Heart right ventricle (tissue), 16 donors: ENCODE measurements at regions of chr10 and their contacts with region 1.

Region 1: GRCh38 chr10:113126229-113127201 is 176.5 kb downstream of the TCF7L2 start:
- DNase-seq: peak; percentile 55 to 75
- ATAC-seq: peak; percentile 87 to 99 (median 94)
- H3K4me3 ChIP-seq: peak overlapping the region in 8 of 10 donors; percentile 19 to 47 (median 39)
- H3K27ac ChIP-seq: peak overlapping the region in 7 of 10 donors; percentile 5 to 69 (median 28)
- H3K4me1 ChIP-seq: peaks cover 0 to 27% (median 4%) of the 10 kb centered on the region in 9 donors
- H3K27me3 ChIP-seq: peaks cover 0 to 18% (median 0%) of the 10 kb centered on the region in 7 donors
- CTCF ChIP-seq: peak; percentile 54 to 87 (median 75)

Region 2: DNA sequence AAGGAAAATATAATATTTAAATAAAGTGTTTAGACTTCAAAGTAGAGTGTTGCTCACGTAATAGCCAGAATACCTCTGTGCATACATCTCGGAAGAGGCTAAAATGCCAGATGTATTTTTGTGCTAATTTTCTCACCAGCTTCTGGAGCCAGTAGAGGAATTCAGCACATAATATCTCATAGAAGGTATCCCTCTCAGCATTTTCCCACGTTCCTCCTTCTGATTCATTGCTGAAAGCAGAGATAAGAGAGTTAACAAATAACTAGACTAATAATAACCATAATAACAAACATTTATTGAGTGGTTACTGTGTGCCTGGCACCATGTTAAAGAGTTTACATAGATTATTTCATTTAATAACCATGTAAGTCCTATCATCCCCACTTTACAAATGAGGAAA is 555.9 kb before region 1 on chr10:
- intact Hi-C with region 1: loop called in 6 of 10 experiments (anchors 5 to 10 kb)
- DNase-seq: no peak
- ATAC-seq: no peak
- H3K4me3 ChIP-seq: no peak overlapping the region
- H3K27ac ChIP-seq: no peak overlapping the region
- H3K4me1 ChIP-seq: no peaks in the 10 kb centered on the region
- H3K27me3 ChIP-seq: no peaks in the 10 kb centered on the region
- CTCF ChIP-seq: no peak

Region 3: GRCh38 chr10:113027574-113028455 is 98.7 kb before region 1 on chr10:
- intact Hi-C with region 1: no loop called
- DNase-seq: no peak
- ATAC-seq: peak; percentile 44 to 65 (median 53)
- H3K4me3 ChIP-seq: peak overlapping the region in 2 of 10 donors; percentile 16 to 26
- H3K27ac ChIP-seq: peak overlapping the region in 8 of 10 donors; percentile 14 to 82 (median 52)
- H3K4me1 ChIP-seq: peaks cover 12 to 52% (median 36%) of the 10 kb centered on the region in 9 donors
- H3K27me3 ChIP-seq: no peaks in the 10 kb centered on the region
- CTCF ChIP-seq: no peak

Region 4: GRCh38 chr10:113073549-113074189 is 52.8 kb before region 1 on chr10:
- intact Hi-C with region 1: no loop called
- DNase-seq: peak; percentile 40 to 54
- ATAC-seq: peak; percentile 31 to 88 (median 66)
- H3K4me3 ChIP-seq: no peak overlapping the region
- H3K27ac ChIP-seq: peak overlapping the region in 9 of 10 donors; percentile 12 to 58 (median 42)
- H3K4me1 ChIP-seq: peaks cover 5 to 43% (median 32%) of the 10 kb centered on the region in 9 donors
- H3K27me3 ChIP-seq: no peaks in the 10 kb centered on the region
- CTCF ChIP-seq: no peak

Region 5: DNA sequence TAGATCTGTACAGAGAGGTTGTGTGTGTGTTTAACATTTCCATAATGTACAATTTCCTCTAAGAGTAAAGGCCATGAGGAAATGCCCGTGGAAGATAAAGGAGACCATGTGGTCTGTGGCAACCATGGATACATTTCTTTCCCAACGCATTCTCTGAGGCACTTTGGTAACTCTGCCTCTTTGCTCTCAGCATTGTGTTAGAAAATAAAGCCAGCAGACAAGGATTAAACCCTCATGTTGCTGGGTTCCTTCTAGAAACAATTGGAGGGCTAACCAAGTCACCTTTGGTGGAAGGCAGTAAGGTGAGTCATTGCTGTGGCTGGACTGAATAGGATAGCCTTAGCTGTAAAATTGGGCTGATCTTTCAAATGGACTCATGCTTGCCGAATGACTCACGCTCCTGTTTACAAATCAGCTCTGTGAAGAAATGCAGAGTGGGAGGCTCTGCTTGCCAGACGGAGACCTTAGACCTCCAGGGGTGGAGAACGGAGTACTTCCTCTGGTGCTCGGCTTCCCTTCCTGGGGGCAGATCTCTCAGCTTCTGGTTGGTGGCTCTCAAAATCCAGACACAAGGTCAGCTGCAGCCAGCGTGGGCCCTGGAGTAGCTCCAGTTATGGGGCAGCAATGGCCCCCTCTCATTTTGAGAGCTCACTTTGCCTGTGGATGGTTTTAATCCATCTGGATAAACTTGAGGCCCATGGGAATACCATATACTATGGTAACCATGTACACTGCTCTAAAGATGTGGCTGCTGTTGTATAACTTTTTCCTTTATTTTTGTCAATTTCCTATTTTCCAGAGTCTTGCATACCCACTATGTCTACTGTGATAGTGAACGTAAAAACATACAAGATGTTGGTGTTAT is 39.1 kb before region 1 on chr10:
- intact Hi-C with region 1: loop called in 1 of 10 experiments (anchors 5 kb)
- DNase-seq: peak in 1 of 2 donors; percentile 27
- ATAC-seq: peak in 7 of 8 donors; percentile 56 to 95 (median 84)
- H3K4me3 ChIP-seq: no peak overlapping the region
- H3K27ac ChIP-seq: peak overlapping the region in 5 of 10 donors; percentile 10 to 70 (median 44)
- H3K4me1 ChIP-seq: peaks cover 4 to 32% (median 17%) of the 10 kb centered on the region in 9 donors
- H3K27me3 ChIP-seq: peaks cover 0 to 13% (median 0%) of the 10 kb centered on the region in 7 donors
- CTCF ChIP-seq: no peak

Region 6: DNA sequence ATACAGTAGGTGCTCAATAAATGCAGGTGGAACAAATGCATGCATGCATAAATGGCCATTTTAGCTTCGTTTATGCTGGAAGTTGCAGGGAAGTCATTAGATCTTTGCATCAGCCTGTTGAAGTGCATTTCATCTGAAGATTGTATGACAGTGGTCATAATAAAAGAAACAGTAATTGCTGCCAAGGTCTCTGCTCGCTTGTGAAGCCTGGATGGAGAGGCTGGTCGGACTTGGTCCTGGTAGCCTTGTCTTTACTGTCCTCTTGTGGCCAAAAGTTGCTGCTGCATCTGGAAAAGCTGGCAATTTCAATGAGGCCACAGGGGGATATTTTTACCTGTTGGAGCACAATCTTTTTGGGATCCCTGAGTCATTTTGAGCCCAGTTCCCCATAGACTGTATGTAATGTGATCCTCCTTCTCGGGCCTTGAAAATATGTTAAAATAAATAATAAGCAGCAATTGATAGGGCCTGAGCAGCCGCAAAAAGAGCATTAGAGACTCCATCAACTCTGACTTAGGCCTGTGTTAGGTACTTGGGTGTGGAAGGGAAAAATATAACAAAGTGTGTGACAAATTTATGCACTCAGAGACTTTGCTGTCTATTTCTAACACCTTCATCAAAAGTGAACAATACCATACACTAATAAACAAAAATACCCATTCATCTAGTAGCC is 394.7 kb after region 1 on chr10:
- intact Hi-C with region 1: loop called in 1 of 10 experiments (anchors 10 kb)
- DNase-seq: peak; percentile 29 to 68
- ATAC-seq: peak; percentile 73 to 89 (median 84)
- H3K4me3 ChIP-seq: no peak overlapping the region
- H3K27ac ChIP-seq: no peak overlapping the region
- H3K4me1 ChIP-seq: peaks cover 0 to 14% (median 5%) of the 10 kb centered on the region in 9 donors
- H3K27me3 ChIP-seq: peaks cover 0 to 4% (median 0%) of the 10 kb centered on the region in 7 donors
- CTCF ChIP-seq: peak; percentile 85 to 97 (median 93)